CD4-positive, alpha-beta memory T cell (primary cell): ENCODE measurements at regions of chr4 and their contacts with region 1.

Region 1: GRCh38 chr4:151760712-151761527 is at the start of gene GATB:
- DNase-seq: peak; percentile 91 to 97 (median 93)
- H3K4me3 ChIP-seq: peak within 1 kb of the TSS; percentile 77 to 84
- H3K4me3 Mint-ChIP-seq: peak within 1 kb of the TSS; percentile 96 to 100 (median 98)
- H3K27ac ChIP-seq: peak within 1 kb of the TSS; percentile 60
- H3K27ac Mint-ChIP-seq: peak within 1 kb of the TSS; percentile 87 to 98 (median 97)
- H3K4me1 ChIP-seq: peaks cover 13% of the 10 kb centered on the region
- H3K4me1 Mint-ChIP-seq: peaks cover 13 to 19% (median 17%) of the 10 kb centered on the region in 4 donors
- H3K27me3 ChIP-seq: no peaks in the 10 kb centered on the region
- H3K27me3 Mint-ChIP-seq: peaks cover under 1 to 1% of the 10 kb centered on the region in 2 donors
- total RNA-seq, gene GATB: 10.8 to 12.5 TPM

Region 2: GRCh38 chr4:151099229-151099975 is 661.5 kb before region 1 on chr4 and contains the start of gene RPS3A:
- CTCF ChIA-PET with region 1: no interaction called
- POLR2A ChIA-PET with region 1: interaction called, 6 read pairs
- intact Hi-C with region 1: loop called (anchors 1 kb)
- DNase-seq: peak; percentile 99 to 100 (median 99)
- H3K4me3 ChIP-seq: peak within 1 kb of the TSS; percentile 79 to 82
- H3K4me3 Mint-ChIP-seq: peak within 1 kb of the TSS; percentile 91 to 99 (median 96)
- H3K27ac ChIP-seq: peak within 1 kb of the TSS; percentile 86
- H3K27ac Mint-ChIP-seq: peak within 1 kb of the TSS; percentile 95 to 99 (median 98)
- H3K4me1 ChIP-seq: peaks cover 32% of the 10 kb centered on the region
- H3K4me1 Mint-ChIP-seq: peaks cover 19 to 41% (median 27%) of the 10 kb centered on the region in 4 donors
- H3K27me3 ChIP-seq: no peaks in the 10 kb centered on the region
- H3K27me3 Mint-ChIP-seq: peaks cover 0 to 3% of the 10 kb centered on the region in 2 donors
- total RNA-seq, gene RPS3A: 4,011 to 4,334 TPM

Region 3: DNA sequence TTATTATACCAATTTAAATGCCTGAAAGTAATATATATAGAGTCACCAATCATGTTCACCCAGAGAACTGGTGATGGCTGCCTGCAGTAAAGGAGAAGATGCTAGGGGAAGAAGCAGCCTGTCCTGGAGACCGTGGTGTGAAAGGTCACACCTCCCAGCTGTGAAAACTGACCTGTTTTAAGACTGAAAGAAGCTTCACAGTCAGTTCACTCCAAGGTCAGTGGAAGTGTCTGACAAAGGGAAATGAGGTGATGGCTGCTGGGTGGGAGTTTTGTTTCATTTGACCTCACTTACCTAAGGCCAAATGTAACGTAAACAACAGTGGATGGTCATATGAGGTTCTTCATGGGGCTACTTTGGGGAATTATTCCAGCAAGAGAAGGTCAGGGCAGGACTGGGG is 352.0 kb after region 1 on chr4:
- CTCF ChIA-PET with region 1: no interaction called
- POLR2A ChIA-PET with region 1: no interaction called
- intact Hi-C with region 1: loop called (anchors 1 kb)
- DNase-seq: no peak
- H3K4me3 ChIP-seq: no peak overlapping the region
- H3K4me3 Mint-ChIP-seq: peak overlapping the region in 2 of 8 donors; percentile 41 to 52
- H3K27ac ChIP-seq: no peak overlapping the region
- H3K27ac Mint-ChIP-seq: peak overlapping the region; percentile 35 to 93 (median 80)
- H3K4me1 ChIP-seq: peaks cover 70% of the 10 kb centered on the region
- H3K4me1 Mint-ChIP-seq: peaks cover 64 to 90% (median 77%) of the 10 kb centered on the region in 4 donors
- H3K27me3 ChIP-seq: no peaks in the 10 kb centered on the region
- H3K27me3 Mint-ChIP-seq: no peaks in the 10 kb centered on the region

Region 4: DNA sequence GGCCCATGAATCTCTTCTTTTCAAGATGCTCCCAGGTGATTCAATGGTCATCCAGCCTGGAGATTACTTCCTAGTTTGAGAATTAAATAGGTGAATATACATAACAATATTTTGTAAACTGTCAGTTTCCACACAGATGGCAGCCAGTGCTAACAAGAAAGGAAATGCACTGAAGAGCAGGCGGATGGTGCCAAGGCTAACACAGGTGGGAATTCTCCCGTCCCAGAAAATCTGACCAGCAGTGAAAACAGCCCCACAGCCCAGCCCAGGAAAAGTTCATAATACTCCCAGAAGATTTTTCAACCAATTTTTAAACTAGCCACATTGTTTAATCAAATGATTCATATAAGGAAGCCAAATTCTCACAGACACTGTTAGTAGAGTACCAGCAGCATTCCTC is 387.1 kb after region 1 on chr4:
- CTCF ChIA-PET with region 1: no interaction called
- POLR2A ChIA-PET with region 1: no interaction called
- intact Hi-C with region 1: no loop called
- DNase-seq: no peak
- H3K4me3 ChIP-seq: no peak overlapping the region
- H3K4me3 Mint-ChIP-seq: no peak overlapping the region
- H3K27ac ChIP-seq: no peak overlapping the region
- H3K27ac Mint-ChIP-seq: no peak overlapping the region
- H3K4me1 ChIP-seq: no peaks in the 10 kb centered on the region
- H3K4me1 Mint-ChIP-seq: peaks cover 0 to 5% (median under 1%) of the 10 kb centered on the region in 4 donors
- H3K27me3 ChIP-seq: no peaks in the 10 kb centered on the region
- H3K27me3 Mint-ChIP-seq: no peaks in the 10 kb centered on the region

Region 5: DNA sequence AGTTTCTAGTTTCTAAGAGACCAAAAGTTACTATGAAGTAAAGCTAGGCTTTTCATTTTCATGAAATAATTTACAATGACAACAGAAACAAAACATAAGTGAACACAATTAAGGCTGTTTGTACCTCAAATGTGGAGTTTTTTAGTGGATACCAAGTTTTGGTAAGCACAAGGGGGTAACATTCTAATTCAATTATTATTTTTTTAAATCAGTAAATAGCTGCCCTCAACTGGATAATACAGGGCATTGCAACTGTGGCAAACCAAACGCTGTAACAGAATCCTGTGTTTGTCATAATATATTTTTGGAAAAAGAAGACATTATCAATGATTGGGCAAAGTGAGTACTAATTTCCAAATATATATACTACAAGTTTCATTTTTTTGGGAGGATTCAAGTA is 624.6 kb after region 1 on chr4:
- CTCF ChIA-PET with region 1: no interaction called
- POLR2A ChIA-PET with region 1: no interaction called
- intact Hi-C with region 1: loop called (anchors 1 kb)
- DNase-seq: peak in 1 of 5 donors; percentile 20
- H3K4me3 ChIP-seq: no peak overlapping the region
- H3K4me3 Mint-ChIP-seq: no peak overlapping the region
- H3K27ac ChIP-seq: no peak overlapping the region
- H3K27ac Mint-ChIP-seq: no peak overlapping the region
- H3K4me1 ChIP-seq: peaks cover 11% of the 10 kb centered on the region
- H3K4me1 Mint-ChIP-seq: peaks cover 22 to 42% (median 27%) of the 10 kb centered on the region in 4 donors
- H3K27me3 ChIP-seq: no peaks in the 10 kb centered on the region
- H3K27me3 Mint-ChIP-seq: no peaks in the 10 kb centered on the region